Right cardiac atrium (tissue), 5 donors: ENCODE measurements at regions of chr2 and their contacts with region 1.

Region 1: GRCh38 chr2:147904044-147904443 is 59.2 kb downstream of the ACVR2A start:
- DNase-seq: no peak
- ATAC-seq: no peak
- H3K4me3 ChIP-seq: no peak overlapping the region
- H3K27ac ChIP-seq: no peak overlapping the region
- H3K4me1 ChIP-seq: no peaks in the 10 kb centered on the region
- H3K27me3 ChIP-seq: no peaks in the 10 kb centered on the region

Region 2: GRCh38 chr2:146734042-146734820 is 1169.8 kb before region 1 on chr2:
- intact Hi-C with region 1: loop called in 1 of 4 experiments (anchors 10 kb)
- DNase-seq: no peak
- ATAC-seq: peak in 1 of 2 donors; percentile 54
- H3K4me3 ChIP-seq: no peak overlapping the region
- H3K27ac ChIP-seq: no peak overlapping the region
- H3K4me1 ChIP-seq: no peaks in the 10 kb centered on the region
- H3K27me3 ChIP-seq: no peaks in the 10 kb centered on the region